Naive thymus-derived CD4-positive, alpha-beta T cell (primary cell): ENCODE measurements at regions of chr20 and their contacts with region 1.

Region 1: GRCh38 chr20:33653218-33653899 is 8.8 kb upstream of the C20orf144 start:
- DNase-seq: peak in 4 of 9 donors; percentile 14 to 30 (median 27)
- ATAC-seq: peak; percentile 72
- H3K4me3 ChIP-seq: no peak overlapping the region
- H3K4me3 Mint-ChIP-seq: no peak overlapping the region
- H3K27ac ChIP-seq: no peak overlapping the region
- H3K27ac Mint-ChIP-seq: peak overlapping the region in 1 of 9 donors; percentile 41
- H3K4me1 ChIP-seq: no peaks in the 10 kb centered on the region
- H3K4me1 Mint-ChIP-seq: peaks cover 0 to 10% (median 3%) of the 10 kb centered on the region in 7 donors
- H3K27me3 ChIP-seq: no peaks in the 10 kb centered on the region
- H3K27me3 Mint-ChIP-seq: no peaks in the 10 kb centered on the region

Region 2: DNA sequence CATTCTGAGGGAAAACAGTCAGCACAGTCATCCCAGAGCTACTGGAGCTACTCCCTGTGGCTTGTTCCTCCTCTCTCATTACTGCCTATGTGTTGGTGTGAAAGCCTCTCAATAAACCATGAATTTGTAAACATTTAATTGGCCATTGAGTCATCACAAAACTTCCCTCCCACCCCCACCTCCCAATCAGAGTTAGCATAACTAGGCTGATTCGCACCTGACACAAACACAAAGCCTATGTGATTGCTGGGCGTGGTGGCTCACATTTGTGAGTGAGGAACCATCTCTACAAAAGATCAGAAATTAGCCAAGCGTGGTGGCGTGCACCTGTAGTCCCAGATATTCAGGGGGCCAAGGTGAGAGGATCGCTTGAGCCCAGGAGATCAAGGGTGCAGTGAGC is 192.6 kb before region 1 on chr20:
- CTCF ChIA-PET with region 1: interaction called, 3 read pairs
- POLR2A ChIA-PET with region 1: no interaction called
- intact Hi-C with region 1: loop called (anchors 1 kb)
- DNase-seq: no peak
- ATAC-seq: no peak
- H3K4me3 ChIP-seq: no peak overlapping the region
- H3K4me3 Mint-ChIP-seq: no peak overlapping the region
- H3K27ac ChIP-seq: no peak overlapping the region
- H3K27ac Mint-ChIP-seq: no peak overlapping the region
- H3K4me1 ChIP-seq: no peaks in the 10 kb centered on the region
- H3K4me1 Mint-ChIP-seq: peaks cover 0 to 4% (median 0%) of the 10 kb centered on the region in 7 donors
- H3K27me3 ChIP-seq: no peaks in the 10 kb centered on the region
- H3K27me3 Mint-ChIP-seq: no peaks in the 10 kb centered on the region

Region 3: GRCh38 chr20:35284267-35284991 is 1631.1 kb after region 1 on chr20 and contains the start of gene EIF6:
- CTCF ChIA-PET with region 1: no interaction called
- POLR2A ChIA-PET with region 1: no interaction called
- intact Hi-C with region 1: no loop called
- DNase-seq: peak; percentile 23 to 78 (median 53)
- ATAC-seq: peak; percentile 80
- H3K4me3 ChIP-seq: peak within 1 kb of the TSS; percentile 56
- H3K4me3 Mint-ChIP-seq: peak within 1 kb of the TSS; percentile 71 to 96 (median 91)
- H3K27ac ChIP-seq: peak within 1 kb of the TSS; percentile 89
- H3K27ac Mint-ChIP-seq: peak within 1 kb of the TSS; percentile 79 to 94 (median 87)
- H3K4me1 ChIP-seq: peaks cover 7 to 8% of the 10 kb centered on the region in 2 donors
- H3K4me1 Mint-ChIP-seq: peaks cover 18 to 43% (median 30%) of the 10 kb centered on the region in 7 donors
- H3K27me3 ChIP-seq: no peaks in the 10 kb centered on the region
- H3K27me3 Mint-ChIP-seq: no peaks in the 10 kb centered on the region
- total RNA-seq, gene EIF6: 35.4 to 117 (median 39.9) TPM